K562 (cell line): ENCODE measurements at regions of chr14 and their contacts with region 1.

Region 1: GRCh38 chr14:78022059-78022458 is 148.1 kb upstream of the NRXN3 start:
- DNase-seq: peak; percentile 66 to 83 (median 70)
- ATAC-seq: peak; percentile 100
- H3K4me3 ChIP-seq: no peak overlapping the region
- H3K27ac ChIP-seq: no peak overlapping the region
- H3K4me1 ChIP-seq: no peaks in the 10 kb centered on the region
- H3K27me3 ChIP-seq: no peaks in the 10 kb centered on the region; a peak in 1 of 5 replicates
- CTCF ChIP-seq: peak; percentile 74 to 82 (median 76)
- EP300 ChIP-seq: no peak
- POLR2A ChIP-seq: no peak
- RAD21 ChIP-seq: peak; percentile 71 to 83

Region 2: DNA sequence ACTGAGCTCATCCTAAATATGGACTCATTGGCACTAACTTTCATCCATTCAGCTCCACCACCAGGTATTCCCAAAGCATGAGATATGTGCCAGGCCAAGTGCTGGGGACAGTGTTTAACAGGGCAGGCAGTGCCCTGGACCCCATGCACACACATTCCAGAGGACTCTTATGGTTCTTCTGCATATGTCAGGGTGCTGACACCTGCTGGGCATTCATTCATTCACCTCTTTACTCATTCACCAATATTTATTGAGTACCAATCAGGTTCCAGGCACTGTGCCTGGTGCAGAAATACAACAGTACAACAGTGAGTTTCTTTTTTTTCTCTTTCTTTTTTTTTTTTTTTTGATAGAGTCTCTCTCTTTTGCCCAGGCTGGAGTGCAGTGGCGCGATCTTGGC is 51.6 kb after region 1 on chr14:
- CTCF ChIA-PET with region 1: no interaction called
- POLR2A ChIA-PET with region 1: no interaction called
- in situ Hi-C with region 1: no loop called
- intact Hi-C with region 1: loop called (anchors 1 kb)
- DNase-seq: peak in 1 of 4 experiments; percentile 3
- ATAC-seq: no peak
- H3K4me3 ChIP-seq: no peak overlapping the region
- H3K27ac ChIP-seq: no peak overlapping the region
- H3K4me1 ChIP-seq: no peaks in the 10 kb centered on the region
- H3K27me3 ChIP-seq: no peaks in the 10 kb centered on the region
- CTCF ChIP-seq: no peak
- EP300 ChIP-seq: no peak
- POLR2A ChIP-seq: no peak
- RAD21 ChIP-seq: peak in 1 of 2 experiments; percentile 12; a peak in 1 of 4 replicates

Region 3: DNA sequence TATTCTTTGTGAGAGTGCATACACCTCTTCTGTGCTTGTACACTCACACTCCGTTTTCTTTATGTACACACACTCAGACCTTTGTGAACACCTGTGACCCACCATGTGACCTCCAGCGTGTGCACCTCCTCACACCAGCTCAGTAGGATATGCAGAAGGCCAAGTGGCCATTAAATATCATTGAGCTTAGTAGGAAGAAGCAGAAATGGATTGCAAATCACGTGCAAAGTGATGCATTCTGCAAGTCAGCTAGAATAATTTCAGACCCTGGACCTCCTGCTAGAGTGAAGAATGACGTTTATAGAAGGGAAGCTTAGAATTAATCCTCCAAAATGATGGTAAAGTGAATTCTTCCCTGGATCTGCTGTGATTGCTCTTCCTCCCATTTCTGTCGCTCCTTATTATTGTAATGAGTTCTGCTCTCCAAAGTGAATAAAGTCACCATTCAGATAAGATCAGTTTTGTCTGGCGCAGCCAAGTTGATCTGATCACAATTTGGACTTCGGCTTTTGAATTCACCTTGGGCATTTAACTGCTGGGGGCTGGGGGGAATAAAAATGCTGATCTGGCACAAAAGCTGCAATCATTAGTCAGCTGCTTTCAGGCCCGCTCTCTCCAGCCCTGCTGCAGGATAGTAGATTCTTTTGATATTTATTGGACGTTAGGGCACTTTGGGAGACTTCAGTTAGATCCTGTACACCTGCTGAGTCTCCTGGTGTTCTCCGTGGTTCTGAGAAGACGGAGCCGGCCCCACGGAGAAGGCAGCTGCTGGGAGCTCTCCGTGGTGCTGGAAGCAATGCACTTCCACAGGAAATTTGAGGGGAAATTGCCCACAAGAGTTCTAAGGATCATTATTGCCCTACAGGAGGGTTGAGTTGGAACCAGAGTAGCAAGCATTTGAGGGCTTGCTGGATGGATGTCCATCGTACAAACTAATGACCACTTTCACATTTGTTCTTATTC is 135.7 kb after region 1 on chr14:
- CTCF ChIA-PET with region 1: no interaction called
- POLR2A ChIA-PET with region 1: no interaction called
- in situ Hi-C with region 1: no loop called
- intact Hi-C with region 1: loop called (anchors 1 kb)
- DNase-seq: peak; percentile 12 to 16 (median 14)
- ATAC-seq: no peak
- H3K4me3 ChIP-seq: no peak overlapping the region
- H3K27ac ChIP-seq: no peak overlapping the region
- H3K4me1 ChIP-seq: no peaks in the 10 kb centered on the region; a peak in 1 of 5 replicates
- H3K27me3 ChIP-seq: no peaks in the 10 kb centered on the region
- CTCF ChIP-seq: no peak
- EP300 ChIP-seq: no peak
- POLR2A ChIP-seq: no peak
- RAD21 ChIP-seq: no peak

Region 4: DNA sequence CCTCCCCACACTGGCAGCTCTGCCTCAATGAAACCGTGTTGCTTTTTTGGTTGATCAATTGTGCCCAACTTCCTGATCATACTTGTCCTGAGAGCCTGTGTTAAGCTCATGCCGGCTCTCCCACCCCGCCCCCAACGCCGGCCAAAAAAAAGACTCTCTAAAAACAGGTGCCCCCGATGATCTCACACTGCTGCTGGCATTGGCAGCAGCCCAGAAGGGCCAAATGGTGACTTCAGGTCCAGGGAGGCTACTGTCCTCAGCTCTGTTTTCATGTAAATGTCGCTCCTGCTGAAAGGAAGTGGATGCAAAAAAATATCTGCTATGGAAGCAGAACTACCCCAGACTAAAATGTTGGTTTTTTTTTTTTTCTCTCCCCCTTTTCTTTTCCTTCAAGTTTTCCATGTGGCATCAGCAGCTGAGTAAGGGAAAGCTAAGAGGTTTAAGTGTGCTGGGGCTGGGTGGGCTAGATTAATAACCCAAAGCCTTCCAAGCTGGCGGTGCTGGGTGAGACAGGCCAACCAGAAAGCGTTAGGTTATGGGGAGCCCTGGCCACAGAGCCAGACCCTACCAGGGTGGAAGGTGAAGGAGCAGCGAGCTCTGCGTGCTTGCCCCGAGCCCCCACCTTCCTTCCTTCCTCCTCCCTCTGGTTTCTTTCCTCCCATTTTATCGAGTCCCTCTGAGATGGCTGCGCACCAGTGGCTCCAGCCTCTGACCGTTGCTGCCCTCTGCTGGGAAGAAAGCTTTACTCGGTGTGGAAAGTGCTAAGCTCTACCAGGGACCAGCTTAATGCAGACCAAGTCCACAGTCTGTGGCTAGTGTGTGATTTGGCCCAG is 544.2 kb after region 1 on chr14:
- CTCF ChIA-PET with region 1: no interaction called
- POLR2A ChIA-PET with region 1: no interaction called
- in situ Hi-C with region 1: no loop called
- intact Hi-C with region 1: loop called (anchors 5 kb)
- DNase-seq: peak; percentile 39 to 66 (median 46)
- ATAC-seq: peak; percentile 99
- H3K4me3 ChIP-seq: no peak overlapping the region
- H3K27ac ChIP-seq: no peak overlapping the region
- H3K4me1 ChIP-seq: no peaks in the 10 kb centered on the region
- H3K27me3 ChIP-seq: no peaks in the 10 kb centered on the region
- CTCF ChIP-seq: peak; percentile 71 to 75 (median 72)
- EP300 ChIP-seq: no peak
- POLR2A ChIP-seq: no peak
- RAD21 ChIP-seq: peak; percentile 63 to 76

Region 5: GRCh38 chr14:78598041-78598920 is 576.2 kb after region 1 on chr14:
- CTCF ChIA-PET with region 1: no interaction called
- POLR2A ChIA-PET with region 1: no interaction called
- in situ Hi-C with region 1: loop called (anchors 25 kb)
- intact Hi-C with region 1: loop called (anchors 10 kb)
- DNase-seq: peak; percentile 55 to 73 (median 65)
- ATAC-seq: peak; percentile 99
- H3K4me3 ChIP-seq: no peak overlapping the region
- H3K27ac ChIP-seq: no peak overlapping the region
- H3K4me1 ChIP-seq: no peaks in the 10 kb centered on the region
- H3K27me3 ChIP-seq: no peaks in the 10 kb centered on the region
- CTCF ChIP-seq: peak; percentile 80 to 83 (median 81)
- EP300 ChIP-seq: no peak
- POLR2A ChIP-seq: no peak
- RAD21 ChIP-seq: peak; percentile 57 to 68